PC-3 (cell line): ENCODE measurements at regions of chr1 and their contacts with region 1.

Region 1: DNA sequence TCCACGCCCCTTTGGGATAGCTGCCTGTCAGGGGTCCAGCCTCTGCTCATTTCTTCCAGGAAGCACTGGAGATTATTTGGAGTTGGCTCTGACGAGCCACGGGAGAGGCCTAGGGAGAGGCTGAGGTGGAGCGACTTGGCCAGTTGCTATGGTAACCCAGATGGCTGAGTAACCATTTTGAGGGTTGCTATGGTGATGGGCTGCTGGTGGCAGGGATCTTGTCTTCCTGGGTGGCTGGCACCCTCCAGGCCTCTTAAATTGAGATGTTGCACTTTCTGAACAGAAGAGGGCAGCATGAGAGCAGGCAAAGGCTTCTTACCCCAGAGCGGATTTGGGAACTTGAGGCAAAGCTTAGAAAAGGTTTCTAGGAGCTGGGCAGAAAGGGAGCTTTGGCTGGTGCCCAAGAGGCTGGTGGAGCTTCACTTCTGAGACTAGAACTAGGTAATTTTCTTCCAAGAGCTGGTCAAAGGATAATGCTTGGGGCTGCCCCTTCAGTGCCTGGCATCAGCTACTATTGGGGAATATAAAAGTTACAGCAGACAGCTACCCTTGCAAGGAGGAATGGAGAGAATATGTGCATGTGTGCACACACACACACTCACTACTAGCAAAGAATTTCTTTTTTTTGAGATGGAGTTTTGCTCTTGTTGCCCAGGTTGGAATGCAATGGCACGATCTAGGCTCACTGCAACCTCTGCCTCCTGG is 72.5 kb downstream of the NDUFS5 start:
- DNase-seq: peak; percentile 87
- ATAC-seq: peak; percentile 52
- H3K4me3 ChIP-seq: no peak overlapping the region
- H3K27ac ChIP-seq: no peak overlapping the region
- H3K4me1 ChIP-seq: peaks cover 26% of the 10 kb centered on the region
- H3K27me3 ChIP-seq: no peaks in the 10 kb centered on the region
- CTCF ChIP-seq: peak; percentile 91

Region 2: GRCh38 chr1:39158327-39159086 is 59.8 kb after region 1 on chr1:
- CTCF ChIA-PET with region 1: interaction called, 5 read pairs
- POLR2A ChIA-PET with region 1: no interaction called
- intact Hi-C with region 1: loop called (anchors 1 kb)
- DNase-seq: peak; percentile 91
- ATAC-seq: peak; percentile 65
- H3K4me3 ChIP-seq: peak overlapping the region; percentile 61
- H3K27ac ChIP-seq: peak overlapping the region; percentile 97
- H3K4me1 ChIP-seq: peaks cover 65% of the 10 kb centered on the region
- H3K27me3 ChIP-seq: no peaks in the 10 kb centered on the region
- CTCF ChIP-seq: 0 out of 2 replicates have a peak, but pooled peaks have one; percentile 30

Region 3: DNA sequence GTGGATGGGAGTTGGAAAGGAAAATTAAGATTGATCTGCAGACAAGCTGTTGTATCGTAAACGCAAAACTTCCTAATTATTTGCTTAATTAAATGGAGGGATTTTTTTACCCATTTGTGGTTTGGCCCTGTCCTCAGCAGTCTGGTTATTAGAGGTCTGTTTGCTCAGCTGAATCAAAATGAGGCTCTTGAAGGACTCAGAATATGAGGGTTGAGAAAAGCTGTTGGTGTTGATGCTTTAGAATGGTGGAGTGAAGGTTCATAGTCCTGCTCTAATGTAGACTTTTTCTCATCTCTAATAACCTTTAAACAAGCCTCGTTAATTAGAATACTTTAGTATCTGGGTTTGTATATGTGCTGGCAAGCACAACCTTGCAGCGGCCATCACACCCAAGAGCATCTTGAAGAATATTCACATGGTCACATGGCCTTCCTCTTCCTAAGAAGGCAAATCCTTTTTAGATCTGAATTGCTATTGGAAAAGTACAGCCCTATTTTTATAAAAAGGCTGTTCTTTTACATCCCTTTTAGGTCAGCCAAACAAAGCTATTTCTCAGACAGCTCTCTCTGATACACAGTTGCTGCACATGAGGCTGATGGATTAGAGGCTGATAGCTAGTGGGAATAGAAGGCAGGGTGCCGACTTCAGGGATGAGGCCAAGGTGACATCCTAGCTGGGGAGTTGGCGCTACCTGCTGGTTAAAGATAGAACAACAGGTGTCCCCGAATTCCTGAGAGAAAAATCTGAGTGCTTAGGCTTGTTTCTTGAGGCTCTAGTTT is 159.6 kb after region 1 on chr1:
- CTCF ChIA-PET with region 1: interaction called, 16 read pairs
- POLR2A ChIA-PET with region 1: no interaction called
- intact Hi-C with region 1: loop called (anchors 1 kb)
- DNase-seq: peak; percentile 84
- ATAC-seq: peak; percentile 84
- H3K4me3 ChIP-seq: no peak overlapping the region
- H3K27ac ChIP-seq: no peak overlapping the region
- H3K4me1 ChIP-seq: no peaks in the 10 kb centered on the region
- H3K27me3 ChIP-seq: no peaks in the 10 kb centered on the region
- CTCF ChIP-seq: peak; percentile 95

Region 4: DNA sequence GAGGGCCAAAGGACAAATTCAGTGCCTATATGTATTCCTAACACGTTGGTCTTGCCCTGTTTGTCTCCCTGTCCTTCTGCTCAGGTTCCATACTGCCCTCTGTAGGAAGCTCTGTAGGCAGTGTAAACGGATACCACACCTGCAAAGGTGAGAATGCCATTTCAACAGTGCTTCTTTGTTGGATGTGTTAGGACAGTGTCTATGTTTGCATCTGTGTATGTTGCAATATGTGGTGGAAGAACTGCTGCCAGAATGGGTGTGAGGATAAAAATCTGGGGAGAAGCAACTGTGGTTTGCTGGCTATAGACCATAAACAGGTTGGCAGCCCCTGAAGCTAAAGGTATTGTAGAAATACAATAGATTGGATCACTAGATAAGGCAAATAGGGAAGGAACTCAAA is 279.7 kb after region 1 on chr1:
- CTCF ChIA-PET with region 1: interaction called, 3 read pairs
- POLR2A ChIA-PET with region 1: no interaction called
- intact Hi-C with region 1: loop called (anchors 5 kb)
- DNase-seq: peak; percentile 74
- ATAC-seq: peak; percentile 94
- H3K4me3 ChIP-seq: no peak overlapping the region
- H3K27ac ChIP-seq: no peak overlapping the region
- H3K4me1 ChIP-seq: no peaks in the 10 kb centered on the region
- H3K27me3 ChIP-seq: no peaks in the 10 kb centered on the region
- CTCF ChIP-seq: peak; percentile 90